CD8-positive, alpha-beta T cell (primary cell): ENCODE measurements at regions of chr10 and their contacts with region 1.

Region 1: GRCh38 chr10:110007701-110008517 is at the start of gene ADD3:
- DNase-seq: peak; percentile 86 to 97 (median 95)
- ATAC-seq: peak; percentile 71
- H3K4me3 ChIP-seq: peak within 1 kb of the TSS; percentile 85 to 86
- H3K4me3 Mint-ChIP-seq: no peak within 1 kb of the TSS
- H3K27ac ChIP-seq: peak within 1 kb of the TSS; percentile 77 to 82
- H3K27ac Mint-ChIP-seq: peak within 1 kb of the TSS; percentile 92
- H3K4me1 ChIP-seq: peaks cover 34% of the 10 kb centered on the region
- H3K4me1 Mint-ChIP-seq: peaks cover 42% of the 10 kb centered on the region
- H3K27me3 ChIP-seq: no peaks in the 10 kb centered on the region
- H3K27me3 Mint-ChIP-seq: no peaks in the 10 kb centered on the region
- CTCF ChIP-seq: no peak
- total RNA-seq, gene ADD3: 135 to 148 TPM

Region 2: DNA sequence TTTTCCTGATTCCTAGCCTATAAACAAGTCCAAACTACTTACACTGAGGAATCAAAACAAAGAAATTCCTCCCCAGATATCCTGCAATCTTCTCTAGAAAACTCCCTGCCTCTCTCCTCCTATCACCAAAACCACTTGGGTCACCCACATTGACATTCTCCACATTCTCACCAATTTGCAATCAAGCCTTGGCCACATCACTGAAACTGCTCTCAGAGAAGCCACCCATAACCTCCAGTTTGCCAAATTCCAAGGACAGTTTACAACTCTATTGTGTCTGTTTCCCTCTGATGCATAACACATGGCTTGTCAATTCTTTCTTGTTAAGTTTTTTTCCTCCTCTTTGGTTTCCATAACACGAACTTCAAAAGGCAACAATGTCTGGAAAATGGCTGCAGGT is 318.1 kb before region 1 on chr10:
- CTCF ChIA-PET with region 1: no interaction called
- POLR2A ChIA-PET with region 1: no interaction called
- intact Hi-C with region 1: no loop called
- DNase-seq: no peak
- ATAC-seq: no peak
- H3K4me3 ChIP-seq: no peak overlapping the region
- H3K4me3 Mint-ChIP-seq: no peak overlapping the region
- H3K27ac ChIP-seq: no peak overlapping the region
- H3K27ac Mint-ChIP-seq: no peak overlapping the region
- H3K4me1 ChIP-seq: no peaks in the 10 kb centered on the region
- H3K4me1 Mint-ChIP-seq: no peaks in the 10 kb centered on the region
- H3K27me3 ChIP-seq: no peaks in the 10 kb centered on the region
- H3K27me3 Mint-ChIP-seq: peaks cover 3% of the 10 kb centered on the region
- CTCF ChIP-seq: no peak

Region 3: GRCh38 chr10:109914966-109915365 is 92.9 kb before region 1 on chr10:
- CTCF ChIA-PET with region 1: interaction called, 4 read pairs
- POLR2A ChIA-PET with region 1: interaction called, 3 read pairs
- intact Hi-C with region 1: loop called in 1 of 2 experiments (anchors 2 kb)
- DNase-seq: peak in 7 of 9 experiments; percentile 25 to 86 (median 55)
- ATAC-seq: peak; percentile 88
- H3K4me3 ChIP-seq: no peak overlapping the region
- H3K4me3 Mint-ChIP-seq: peak overlapping the region; percentile 62
- H3K27ac ChIP-seq: peak overlapping the region in 1 of 2 experiments; percentile 74
- H3K27ac Mint-ChIP-seq: peak overlapping the region; percentile 55
- H3K4me1 ChIP-seq: peaks cover 40% of the 10 kb centered on the region
- H3K4me1 Mint-ChIP-seq: peaks cover 83% of the 10 kb centered on the region
- H3K27me3 ChIP-seq: no peaks in the 10 kb centered on the region
- H3K27me3 Mint-ChIP-seq: no peaks in the 10 kb centered on the region
- CTCF ChIP-seq: no peak

Region 4: DNA sequence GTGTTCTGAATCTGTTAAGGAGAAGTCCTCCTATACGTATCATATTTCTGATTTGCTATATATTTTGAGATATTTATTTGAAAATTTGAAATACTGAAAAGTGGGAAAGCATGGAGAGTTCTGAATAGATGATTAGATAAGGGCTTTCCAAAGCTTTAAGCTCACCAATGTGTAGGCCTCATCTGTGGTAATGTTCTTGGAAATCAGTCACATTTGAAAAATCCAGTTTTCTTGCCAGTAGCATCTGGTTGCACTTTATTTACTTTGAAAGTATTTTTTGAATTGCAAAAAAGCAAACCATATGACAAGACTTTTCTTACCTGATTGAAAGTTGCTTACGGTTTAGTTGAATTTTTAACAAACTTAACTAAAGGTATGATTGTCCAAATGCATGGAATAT is 21.5 kb after region 1 on chr10:
- CTCF ChIA-PET with region 1: no interaction called
- POLR2A ChIA-PET with region 1: no interaction called
- intact Hi-C with region 1: loop called in 1 of 2 experiments (anchors 2 kb)
- DNase-seq: no peak
- ATAC-seq: no peak
- H3K4me3 ChIP-seq: no peak overlapping the region
- H3K4me3 Mint-ChIP-seq: no peak overlapping the region
- H3K27ac ChIP-seq: no peak overlapping the region
- H3K27ac Mint-ChIP-seq: no peak overlapping the region
- H3K4me1 ChIP-seq: peaks cover 42% of the 10 kb centered on the region
- H3K4me1 Mint-ChIP-seq: peaks cover 64% of the 10 kb centered on the region
- H3K27me3 ChIP-seq: no peaks in the 10 kb centered on the region
- H3K27me3 Mint-ChIP-seq: no peaks in the 10 kb centered on the region
- CTCF ChIP-seq: no peak

Region 5: GRCh38 chr10:110101464-110102144 is 93.7 kb after region 1 on chr10:
- CTCF ChIA-PET with region 1: no interaction called
- POLR2A ChIA-PET with region 1: no interaction called
- intact Hi-C with region 1: loop called in 1 of 2 experiments (anchors 2 kb)
- DNase-seq: no peak
- ATAC-seq: no peak
- H3K4me3 ChIP-seq: no peak overlapping the region
- H3K4me3 Mint-ChIP-seq: no peak overlapping the region
- H3K27ac ChIP-seq: no peak overlapping the region
- H3K27ac Mint-ChIP-seq: peak overlapping the region; percentile 14
- H3K4me1 ChIP-seq: peaks cover 24% of the 10 kb centered on the region
- H3K4me1 Mint-ChIP-seq: peaks cover 55% of the 10 kb centered on the region
- H3K27me3 ChIP-seq: no peaks in the 10 kb centered on the region
- H3K27me3 Mint-ChIP-seq: no peaks in the 10 kb centered on the region
- CTCF ChIP-seq: no peak

Region 6: DNA sequence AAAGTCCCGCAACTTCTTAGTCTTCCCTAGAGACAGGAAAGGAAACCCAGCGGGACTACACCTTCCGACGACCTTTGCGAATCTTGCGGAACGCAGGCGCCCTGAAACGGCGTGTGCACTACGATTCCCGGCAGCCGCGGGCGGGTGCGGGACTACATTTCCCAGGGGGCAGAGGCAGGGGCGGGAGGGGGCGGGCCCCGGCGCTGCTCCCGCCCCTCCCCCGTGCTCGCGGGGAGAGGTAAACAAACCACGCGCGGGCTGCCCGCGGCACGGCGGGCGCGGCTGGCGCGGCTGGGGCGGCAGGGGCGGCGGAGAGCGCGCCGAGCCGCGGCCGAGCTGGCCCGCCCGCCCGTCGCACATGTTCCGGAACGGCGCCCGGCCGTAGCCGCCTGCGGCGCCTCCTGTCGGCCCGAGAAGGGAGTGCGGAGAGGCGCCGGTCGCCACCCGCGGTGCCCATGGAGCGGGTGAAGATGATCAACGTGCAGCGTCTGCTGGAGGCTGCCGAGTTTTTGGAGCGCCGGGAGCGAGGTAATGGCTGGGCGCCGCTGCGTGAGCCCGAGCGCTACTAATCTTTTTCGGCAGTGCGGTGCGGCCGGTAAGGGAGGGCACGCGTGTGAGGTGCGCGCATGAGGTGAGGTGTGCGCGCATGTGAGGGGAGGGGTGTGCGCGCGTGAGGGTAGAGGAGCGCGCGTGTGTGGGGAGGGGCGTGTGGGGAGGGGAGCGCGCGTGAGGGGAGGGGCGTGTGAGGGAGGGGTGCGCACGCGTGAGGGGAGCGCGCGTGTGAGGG is 218.0 kb after region 1 on chr10:
- CTCF ChIA-PET with region 1: no interaction called
- POLR2A ChIA-PET with region 1: interaction called, 3 read pairs
- intact Hi-C with region 1: loop called (anchors 1 to 5 kb)
- DNase-seq: peak; percentile 79 to 95 (median 88)
- ATAC-seq: peak; percentile 54
- H3K4me3 ChIP-seq: peak overlapping the region; percentile 88 to 91
- H3K4me3 Mint-ChIP-seq: peak overlapping the region; percentile 95
- H3K27ac ChIP-seq: peak overlapping the region; percentile 78 to 79
- H3K27ac Mint-ChIP-seq: peak overlapping the region; percentile 94
- H3K4me1 ChIP-seq: peaks cover 22% of the 10 kb centered on the region
- H3K4me1 Mint-ChIP-seq: peaks cover 34% of the 10 kb centered on the region
- H3K27me3 ChIP-seq: peaks cover 0 to 2% of the 10 kb centered on the region in 2 experiments
- H3K27me3 Mint-ChIP-seq: peaks cover 9% of the 10 kb centered on the region
- CTCF ChIP-seq: peak; percentile 50

Region 7: GRCh38 chr10:110497438-110498086 is 489.7 kb after region 1 on chr10 and contains the start of gene DUSP5:
- CTCF ChIA-PET with region 1: no interaction called
- POLR2A ChIA-PET with region 1: no interaction called
- intact Hi-C with region 1: loop called (anchors 1 kb)
- DNase-seq: peak; percentile 89 to 98 (median 94)
- ATAC-seq: peak; percentile 92
- H3K4me3 ChIP-seq: peak within 1 kb of the TSS; percentile 67 to 91
- H3K4me3 Mint-ChIP-seq: peak within 1 kb of the TSS; percentile 91
- H3K27ac ChIP-seq: peak within 1 kb of the TSS; percentile 50 to 63
- H3K27ac Mint-ChIP-seq: peak within 1 kb of the TSS; percentile 91
- H3K4me1 ChIP-seq: peaks cover 41% of the 10 kb centered on the region
- H3K4me1 Mint-ChIP-seq: peaks cover 50% of the 10 kb centered on the region
- H3K27me3 ChIP-seq: no peaks in the 10 kb centered on the region
- H3K27me3 Mint-ChIP-seq: no peaks in the 10 kb centered on the region
- CTCF ChIP-seq: no peak
- total RNA-seq, gene DUSP5: 69.8 TPM

Region 8: DNA sequence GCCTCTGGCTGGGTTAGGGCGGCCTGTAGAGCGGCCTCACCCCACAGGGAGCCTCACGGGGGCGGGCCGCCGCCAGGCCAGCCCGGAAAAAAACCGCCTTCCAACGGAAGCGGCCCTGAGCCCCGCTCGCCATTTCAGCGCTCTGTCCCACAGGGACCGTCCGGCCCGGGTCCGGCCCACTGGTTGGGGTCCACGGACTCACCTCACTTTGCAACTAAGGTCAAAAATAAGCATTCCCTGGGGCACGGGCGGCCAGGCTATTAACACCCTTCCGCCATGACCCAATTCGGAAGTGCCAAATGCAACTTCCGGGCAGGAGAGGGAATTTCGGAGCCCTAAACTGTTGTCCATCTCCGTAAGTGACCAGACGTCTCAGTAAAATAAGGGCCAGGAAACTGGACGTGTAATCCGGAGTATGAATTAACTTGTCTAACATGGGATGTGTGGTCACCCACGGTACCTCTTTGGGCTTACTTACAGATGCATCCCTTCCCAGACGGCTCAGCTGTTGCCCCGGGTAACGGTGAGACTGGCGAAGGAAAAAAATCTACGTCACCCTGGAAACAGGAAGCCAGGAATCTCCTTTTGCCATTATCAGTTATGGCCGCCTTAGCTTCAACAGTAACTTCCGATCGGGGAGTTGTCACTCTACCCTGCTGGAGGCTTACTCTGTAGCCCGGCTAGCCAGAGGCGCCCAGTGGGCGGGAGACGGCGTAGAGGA is 910.9 kb after region 1 on chr10 and contains the start of gene BBIP1:
- CTCF ChIA-PET with region 1: no interaction called
- POLR2A ChIA-PET with region 1: no interaction called
- intact Hi-C with region 1: loop called (anchors 2 to 5 kb)
- DNase-seq: peak in 5 of 9 experiments; percentile 95 to 100 (median 95)
- ATAC-seq: peak; percentile 93
- H3K4me3 ChIP-seq: peak within 1 kb of the TSS; percentile 92 to 100
- H3K4me3 Mint-ChIP-seq: peak within 1 kb of the TSS; percentile 98
- H3K27ac ChIP-seq: peak within 1 kb of the TSS; percentile 99 to 100
- H3K27ac Mint-ChIP-seq: peak within 1 kb of the TSS; percentile 99
- H3K4me1 ChIP-seq: peaks cover 16% of the 10 kb centered on the region
- H3K4me1 Mint-ChIP-seq: peaks cover 51% of the 10 kb centered on the region
- H3K27me3 ChIP-seq: no peaks in the 10 kb centered on the region
- H3K27me3 Mint-ChIP-seq: no peaks in the 10 kb centered on the region
- CTCF ChIP-seq: no peak
- total RNA-seq, gene BBIP1: 9.5 to 11.1 TPM